Naive thymus-derived CD4-positive, alpha-beta T cell (primary cell): ENCODE measurements at regions of chr9 and their contacts with region 1.

Region 1: GRCh38 chr9:94726495-94727191 is at the start of gene AOPEP:
- DNase-seq: peak; percentile 98 to 100 (median 99)
- ATAC-seq: peak; percentile 99
- H3K4me3 ChIP-seq: peak within 1 kb of the TSS; percentile 92
- H3K4me3 Mint-ChIP-seq: peak within 1 kb of the TSS; percentile 88 to 100 (median 98)
- H3K27ac ChIP-seq: peak within 1 kb of the TSS; percentile 82
- H3K27ac Mint-ChIP-seq: peak within 1 kb of the TSS; percentile 92 to 100 (median 98)
- H3K4me1 ChIP-seq: peaks cover 7% of the 10 kb centered on the region in 2 donors
- H3K4me1 Mint-ChIP-seq: peaks cover 7 to 24% (median 19%) of the 10 kb centered on the region in 7 donors
- H3K27me3 ChIP-seq: no peaks in the 10 kb centered on the region
- H3K27me3 Mint-ChIP-seq: peaks cover 0 to 2% (median 0%) of the 10 kb centered on the region in 5 donors
- total RNA-seq, gene AOPEP: 11.0 to 19.0 (median 14.9) TPM

Region 2: DNA sequence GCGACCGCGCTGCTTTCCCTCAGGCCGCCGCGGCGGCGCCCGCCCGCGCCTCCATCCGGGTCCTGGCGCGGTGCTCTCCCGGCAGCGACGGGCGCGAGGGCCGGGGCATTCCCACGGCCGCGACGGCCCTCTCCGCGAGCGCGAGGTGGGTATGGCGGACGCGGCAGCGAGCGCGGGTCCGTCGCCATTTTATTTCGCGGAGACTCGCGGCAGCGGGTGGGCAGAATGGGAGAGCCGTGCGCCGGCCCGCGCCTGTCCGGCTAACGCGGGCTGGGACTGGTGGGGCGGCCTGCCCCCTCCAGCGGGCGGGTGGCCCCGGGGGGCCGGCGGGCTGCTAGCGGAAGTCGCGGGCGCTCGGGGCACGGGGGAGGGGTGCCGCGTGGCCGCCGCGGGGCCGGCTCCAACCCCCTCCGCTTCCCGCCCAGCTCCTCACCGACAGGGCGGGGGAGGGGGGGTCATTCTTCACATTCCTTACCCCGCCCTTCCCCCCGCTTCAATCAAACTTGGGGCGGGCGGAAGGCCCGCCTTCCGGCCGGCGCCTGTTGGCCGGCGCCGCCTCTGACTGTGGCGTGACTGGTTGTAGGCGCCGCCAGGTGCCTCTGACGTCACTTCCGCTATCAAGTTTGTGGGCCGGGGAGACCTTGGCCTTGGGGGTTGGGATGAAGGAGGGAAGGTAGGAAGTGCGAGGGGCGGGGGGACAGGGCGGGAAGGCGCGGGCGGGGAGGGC is 560.2 kb before region 1 on chr9:
- CTCF ChIA-PET with region 1: no interaction called
- POLR2A ChIA-PET with region 1: no interaction called
- intact Hi-C with region 1: loop called in 1 of 2 experiments (anchors 1 kb)
- DNase-seq: peak; percentile 81 to 96 (median 92)
- ATAC-seq: peak; percentile 72
- H3K4me3 ChIP-seq: peak overlapping the region; percentile 82
- H3K4me3 Mint-ChIP-seq: peak overlapping the region; percentile 84 to 96 (median 88)
- H3K27ac ChIP-seq: peak overlapping the region; percentile 100
- H3K27ac Mint-ChIP-seq: peak overlapping the region; percentile 79 to 97 (median 91)
- H3K4me1 ChIP-seq: peaks cover 37 to 38% of the 10 kb centered on the region in 2 donors
- H3K4me1 Mint-ChIP-seq: peaks cover 33 to 61% (median 58%) of the 10 kb centered on the region in 7 donors
- H3K27me3 ChIP-seq: no peaks in the 10 kb centered on the region
- H3K27me3 Mint-ChIP-seq: no peaks in the 10 kb centered on the region

Region 3: GRCh38 chr9:94672811-94673487 is 53.7 kb before region 1 on chr9:
- CTCF ChIA-PET with region 1: interaction called, 3 read pairs
- POLR2A ChIA-PET with region 1: interaction called, 9 read pairs
- intact Hi-C with region 1: loop called (anchors 1 kb)
- DNase-seq: no peak
- ATAC-seq: no peak
- H3K4me3 ChIP-seq: no peak overlapping the region
- H3K4me3 Mint-ChIP-seq: no peak overlapping the region
- H3K27ac ChIP-seq: no peak overlapping the region
- H3K27ac Mint-ChIP-seq: no peak overlapping the region
- H3K4me1 ChIP-seq: no peaks in the 10 kb centered on the region
- H3K4me1 Mint-ChIP-seq: peaks cover 0 to 14% (median 3%) of the 10 kb centered on the region in 7 donors
- H3K27me3 ChIP-seq: no peaks in the 10 kb centered on the region
- H3K27me3 Mint-ChIP-seq: peaks cover 0 to 26% (median 4%) of the 10 kb centered on the region in 5 donors

Region 4: DNA sequence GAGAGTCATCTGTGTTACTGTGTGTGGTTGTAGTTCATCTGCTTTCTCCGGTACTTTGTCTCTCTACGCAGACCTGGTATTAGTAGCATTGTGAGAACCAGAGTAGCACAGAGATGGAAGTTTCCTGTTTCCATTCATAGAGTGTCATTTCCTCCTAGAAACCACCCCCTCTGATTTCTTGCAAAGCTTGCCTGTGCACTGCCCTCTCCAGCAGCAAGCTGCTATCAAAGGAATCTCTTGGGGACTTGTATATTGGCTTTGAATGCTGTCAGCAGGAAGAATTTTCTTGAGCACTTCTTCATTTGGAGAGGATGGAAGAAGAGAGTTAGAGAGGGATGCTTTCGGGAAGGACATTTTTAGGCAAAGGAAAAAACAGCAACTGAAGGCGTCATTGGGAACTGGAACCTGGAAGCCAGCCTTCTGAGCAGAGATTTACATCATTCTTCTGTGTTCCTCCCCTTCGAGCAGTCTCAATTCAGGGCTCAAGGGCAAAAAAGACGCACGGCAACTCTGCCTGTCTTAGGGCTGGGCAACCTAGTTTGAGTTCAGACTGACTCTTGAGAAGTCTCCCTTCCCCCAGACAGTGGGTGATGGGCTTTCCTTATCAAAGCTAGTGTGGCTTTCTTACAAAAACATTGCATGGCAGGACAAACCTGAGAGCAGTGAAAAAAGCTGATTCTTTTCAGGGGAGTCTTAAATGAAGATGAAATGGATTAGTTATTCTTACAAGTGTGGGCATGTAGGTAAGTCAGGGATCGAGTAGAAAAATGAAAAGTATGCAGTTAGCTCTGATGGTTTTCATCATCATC is 226.1 kb after region 1 on chr9:
- CTCF ChIA-PET with region 1: no interaction called
- POLR2A ChIA-PET with region 1: no interaction called
- intact Hi-C with region 1: loop called in 1 of 2 experiments (anchors 1 kb)
- DNase-seq: peak in 7 of 9 donors; percentile 24 to 66 (median 48)
- ATAC-seq: peak; percentile 82
- H3K4me3 ChIP-seq: peak overlapping the region; percentile 1
- H3K4me3 Mint-ChIP-seq: peak overlapping the region; percentile 30 to 83 (median 72)
- H3K27ac ChIP-seq: no peak overlapping the region
- H3K27ac Mint-ChIP-seq: peak overlapping the region; percentile 14 to 86 (median 74)
- H3K4me1 ChIP-seq: peaks cover 20 to 26% of the 10 kb centered on the region in 2 donors
- H3K4me1 Mint-ChIP-seq: peaks cover 26 to 44% (median 36%) of the 10 kb centered on the region in 7 donors
- H3K27me3 ChIP-seq: no peaks in the 10 kb centered on the region
- H3K27me3 Mint-ChIP-seq: no peaks in the 10 kb centered on the region

Region 5: GRCh38 chr9:95317119-95317892 is 590.7 kb after region 1 on chr9 and contains the start of gene FANCC:
- CTCF ChIA-PET with region 1: no interaction called
- POLR2A ChIA-PET with region 1: no interaction called
- intact Hi-C with region 1: loop called in 1 of 2 experiments (anchors 2 kb)
- DNase-seq: peak; percentile 74 to 89 (median 81)
- ATAC-seq: peak; percentile 94
- H3K4me3 ChIP-seq: peak within 1 kb of the TSS; percentile 85
- H3K4me3 Mint-ChIP-seq: peak within 1 kb of the TSS; percentile 78 to 95 (median 92)
- H3K27ac ChIP-seq: peak within 1 kb of the TSS; percentile 91
- H3K27ac Mint-ChIP-seq: peak within 1 kb of the TSS; percentile 75 to 95 (median 89)
- H3K4me1 ChIP-seq: peaks cover 3 to 7% of the 10 kb centered on the region in 2 donors
- H3K4me1 Mint-ChIP-seq: peaks cover 8 to 33% (median 23%) of the 10 kb centered on the region in 7 donors
- H3K27me3 ChIP-seq: no peaks in the 10 kb centered on the region
- H3K27me3 Mint-ChIP-seq: peaks cover 0 to 26% (median 0%) of the 10 kb centered on the region in 5 donors
- total RNA-seq, gene FANCC: 5.7 to 14.6 (median 7.9) TPM

Region 6: GRCh38 chr9:96654443-96655197 is 1928.0 kb after region 1 on chr9:
- CTCF ChIA-PET with region 1: no interaction called
- POLR2A ChIA-PET with region 1: no interaction called
- intact Hi-C with region 1: loop called in 1 of 2 experiments (anchors 2 kb)
- DNase-seq: peak; percentile 65 to 94 (median 86)
- ATAC-seq: peak; percentile 89
- H3K4me3 ChIP-seq: peak overlapping the region; percentile 62
- H3K4me3 Mint-ChIP-seq: peak overlapping the region; percentile 88 to 98 (median 93)
- H3K27ac ChIP-seq: peak overlapping the region; percentile 87
- H3K27ac Mint-ChIP-seq: peak overlapping the region; percentile 88 to 98 (median 97)
- H3K4me1 ChIP-seq: peaks cover 0 to 14% of the 10 kb centered on the region in 2 donors
- H3K4me1 Mint-ChIP-seq: peaks cover 0 to 33% (median 21%) of the 10 kb centered on the region in 7 donors
- H3K27me3 ChIP-seq: no peaks in the 10 kb centered on the region
- H3K27me3 Mint-ChIP-seq: peaks cover 0 to 23% (median 0%) of the 10 kb centered on the region in 5 donors